ENCODE measurements at regions of chr17 and their contacts with region 1.

Region 1: DNA sequence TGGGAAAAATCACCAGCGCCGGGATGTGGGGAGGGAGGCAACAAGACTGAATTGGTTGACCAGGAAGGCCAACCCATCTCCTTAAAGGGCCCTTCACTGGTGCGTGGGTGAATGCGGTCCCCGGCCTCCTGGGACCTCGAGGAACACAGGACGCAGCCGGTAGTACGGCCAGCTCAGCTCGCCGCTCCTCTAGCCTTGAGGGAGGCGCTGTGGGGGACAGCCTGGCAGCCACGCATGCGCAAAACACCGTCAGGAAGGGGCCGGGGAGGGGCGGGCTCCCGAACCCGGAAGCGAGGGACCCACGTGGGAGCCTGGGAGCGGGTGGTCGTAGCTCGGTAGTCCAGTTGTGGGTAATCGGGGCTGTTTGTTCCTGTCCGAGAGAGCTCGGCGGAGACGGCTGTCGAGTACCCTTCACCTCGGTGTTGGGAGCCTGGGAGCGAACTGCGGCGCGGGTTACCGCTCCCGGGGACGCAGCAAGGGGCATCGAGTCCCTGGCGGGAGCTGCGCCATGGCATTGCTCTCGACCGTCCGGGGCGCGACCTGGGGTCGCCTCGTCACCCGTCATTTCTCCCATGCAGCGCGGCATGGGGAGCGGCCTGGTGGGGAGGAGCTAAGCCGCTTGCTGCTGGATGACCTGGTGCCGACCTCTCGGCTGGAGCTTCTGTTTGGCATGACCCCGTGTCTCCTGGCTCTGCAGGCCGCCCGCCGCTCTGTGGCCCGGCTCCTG is at the start of gene MRM1:
- DNase-seq: peak; percentile 93
- ATAC-seq: peak; percentile 88
- H3K4me3 ChIP-seq: peak within 1 kb of the TSS; percentile 55 to 100 (median 90)
- H3K4me3 Mint-ChIP-seq: peak within 1 kb of the TSS; percentile 92
- H3K27ac ChIP-seq: peak within 1 kb of the TSS; percentile 56 to 69
- H3K27ac Mint-ChIP-seq: peak within 1 kb of the TSS; percentile 93
- H3K4me1 ChIP-seq: peaks cover 11 to 25% of the 10 kb centered on the region in 2 donors
- H3K4me1 Mint-ChIP-seq: peaks cover 40% of the 10 kb centered on the region
- H3K27me3 ChIP-seq: no peaks in the 10 kb centered on the region
- H3K27me3 Mint-ChIP-seq: no peaks in the 10 kb centered on the region
- CTCF ChIP-seq: no peak
- total RNA-seq, gene MRM1: 13.5 and 14.4 TPM in 2 replicates

Region 2: DNA sequence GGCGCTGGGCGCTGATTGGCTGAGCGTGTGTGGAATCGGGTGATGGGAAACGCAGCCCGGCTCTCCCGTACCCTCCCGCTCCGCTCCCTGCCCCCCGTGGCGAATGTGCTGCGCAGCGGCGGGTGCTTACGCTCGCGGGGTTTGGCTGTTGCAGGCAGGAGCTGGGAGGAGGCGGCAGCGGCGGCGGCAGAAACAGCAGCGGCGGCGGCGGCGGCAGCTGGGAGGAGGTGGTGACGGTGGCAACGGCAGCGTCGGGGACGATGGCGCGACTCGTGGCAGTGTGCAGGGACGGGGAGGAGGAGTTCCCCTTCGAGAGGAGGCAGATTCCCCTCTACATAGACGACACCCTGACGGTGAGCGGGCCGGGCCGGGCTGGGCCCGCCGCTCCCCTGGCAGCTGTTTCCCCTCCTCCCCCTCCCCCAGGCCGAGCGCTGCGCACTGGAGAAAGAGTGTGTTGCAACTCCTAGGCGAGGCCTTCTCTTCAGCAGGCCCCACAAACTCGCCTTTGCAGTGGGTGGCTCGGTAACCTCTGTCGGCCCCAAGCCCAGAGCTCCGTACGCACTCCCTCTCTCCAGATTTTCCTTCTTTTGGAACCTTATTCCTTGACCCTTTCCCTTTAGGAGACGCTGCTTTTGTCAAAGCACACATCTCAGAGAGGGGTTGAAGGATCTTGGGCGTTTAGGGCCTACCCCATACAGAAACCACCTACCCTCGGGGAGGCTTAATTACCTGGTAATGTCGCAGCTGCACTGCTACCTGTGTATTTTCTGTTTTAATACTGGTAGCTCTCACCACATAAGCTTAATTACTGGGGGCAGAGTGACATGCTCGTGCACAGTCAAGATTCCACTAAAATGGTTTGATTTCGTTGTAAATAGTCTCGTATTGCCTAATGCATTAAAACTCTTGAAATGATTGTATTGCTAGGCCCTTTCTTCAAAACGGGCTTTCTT is 55.7 kb before region 1 on chr17:
- CTCF ChIA-PET with region 1: interaction called, 4 read pairs
- POLR2A ChIA-PET with region 1: interaction called, 10 read pairs
- intact Hi-C with region 1: loop called (anchors 1 kb)
- DNase-seq: peak; percentile 97
- ATAC-seq: peak; percentile 71
- H3K4me3 ChIP-seq: peak overlapping the region; percentile 74 to 94 (median 92)
- H3K4me3 Mint-ChIP-seq: peak overlapping the region; percentile 96
- H3K27ac ChIP-seq: peak overlapping the region; percentile 96 to 100
- H3K27ac Mint-ChIP-seq: peak overlapping the region; percentile 98
- H3K4me1 ChIP-seq: peaks cover 43 to 46% of the 10 kb centered on the region in 2 donors
- H3K4me1 Mint-ChIP-seq: peaks cover 48% of the 10 kb centered on the region
- H3K27me3 ChIP-seq: no peaks in the 10 kb centered on the region
- H3K27me3 Mint-ChIP-seq: no peaks in the 10 kb centered on the region
- CTCF ChIP-seq: no peak

Region 3: DNA sequence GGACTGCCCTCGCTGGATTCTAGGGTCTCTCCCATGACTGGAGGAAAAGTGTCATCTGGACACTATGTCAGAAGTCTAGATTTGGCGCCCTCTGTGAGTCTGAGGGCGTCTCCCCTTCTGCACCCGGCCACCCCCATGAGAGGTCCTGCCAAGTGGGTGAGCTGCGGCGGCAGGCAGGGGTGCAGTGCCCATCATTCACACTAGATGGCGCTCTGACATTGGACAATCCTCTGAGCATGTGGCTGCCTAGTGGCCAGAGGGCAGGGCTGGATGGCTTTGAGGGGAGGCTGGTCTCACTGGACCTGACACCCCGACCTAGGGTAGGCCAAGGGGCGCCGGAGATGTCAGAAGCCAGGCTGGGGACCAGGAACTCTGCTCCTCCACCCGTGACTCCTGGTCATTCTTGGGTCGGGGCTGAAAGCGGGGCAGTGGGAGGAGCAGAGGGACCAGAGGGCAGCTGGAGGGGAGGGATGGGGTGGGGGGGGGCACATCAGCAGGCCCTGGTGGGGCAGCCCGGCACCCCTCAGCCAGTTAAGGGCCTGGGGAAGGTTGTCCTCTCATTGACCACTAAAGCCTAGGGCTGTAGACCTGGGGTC is 27.9 kb after region 1 on chr17:
- CTCF ChIA-PET with region 1: interaction called, 32 read pairs
- POLR2A ChIA-PET with region 1: no interaction called
- intact Hi-C with region 1: no loop called
- DNase-seq: peak; percentile 80
- ATAC-seq: peak; percentile 93
- H3K4me3 ChIP-seq: no peak overlapping the region
- H3K4me3 Mint-ChIP-seq: no peak overlapping the region
- H3K27ac ChIP-seq: no peak overlapping the region
- H3K27ac Mint-ChIP-seq: no peak overlapping the region
- H3K4me1 ChIP-seq: no peaks in the 10 kb centered on the region
- H3K4me1 Mint-ChIP-seq: no peaks in the 10 kb centered on the region
- H3K27me3 ChIP-seq: peaks cover 0 to 5% (median 2%) of the 10 kb centered on the region in 4 experiments
- H3K27me3 Mint-ChIP-seq: peaks cover 15% of the 10 kb centered on the region
- CTCF ChIP-seq: peak; percentile 99

Region 4: DNA sequence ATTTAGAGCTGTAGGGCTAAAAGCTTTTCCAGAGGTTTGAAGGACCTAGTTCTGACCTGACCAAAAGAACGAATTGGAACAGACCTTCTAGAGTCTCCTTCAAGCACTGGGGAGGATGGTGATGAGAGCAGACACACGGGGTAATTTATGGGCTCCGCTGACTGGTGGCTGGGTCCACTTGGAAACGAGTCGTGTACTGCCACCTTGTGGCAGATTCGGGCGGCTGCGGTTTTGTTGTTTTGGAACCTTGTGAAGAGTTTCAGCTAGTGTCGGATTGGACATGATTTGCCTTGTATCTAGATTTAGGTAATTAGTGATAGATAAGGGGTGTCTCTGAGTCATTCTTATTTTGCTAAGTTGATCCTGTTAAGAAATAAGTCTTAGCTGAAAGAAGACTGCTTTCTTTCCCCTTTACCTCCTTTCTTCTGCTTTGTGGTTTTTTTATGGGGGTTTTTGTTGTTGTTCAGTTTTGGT is 446.2 kb after region 1 on chr17:
- CTCF ChIA-PET with region 1: interaction called, 66 read pairs
- POLR2A ChIA-PET with region 1: no interaction called
- intact Hi-C with region 1: loop called (anchors 1 kb)
- DNase-seq: peak; percentile 80
- ATAC-seq: peak; percentile 62
- H3K4me3 ChIP-seq: no peak overlapping the region
- H3K4me3 Mint-ChIP-seq: no peak overlapping the region
- H3K27ac ChIP-seq: no peak overlapping the region
- H3K27ac Mint-ChIP-seq: no peak overlapping the region
- H3K4me1 ChIP-seq: peaks cover 3 to 6% of the 10 kb centered on the region in 2 donors
- H3K4me1 Mint-ChIP-seq: peaks cover 14% of the 10 kb centered on the region
- H3K27me3 ChIP-seq: no peaks in the 10 kb centered on the region
- H3K27me3 Mint-ChIP-seq: no peaks in the 10 kb centered on the region
- CTCF ChIP-seq: peak; percentile 78

Region 5: DNA sequence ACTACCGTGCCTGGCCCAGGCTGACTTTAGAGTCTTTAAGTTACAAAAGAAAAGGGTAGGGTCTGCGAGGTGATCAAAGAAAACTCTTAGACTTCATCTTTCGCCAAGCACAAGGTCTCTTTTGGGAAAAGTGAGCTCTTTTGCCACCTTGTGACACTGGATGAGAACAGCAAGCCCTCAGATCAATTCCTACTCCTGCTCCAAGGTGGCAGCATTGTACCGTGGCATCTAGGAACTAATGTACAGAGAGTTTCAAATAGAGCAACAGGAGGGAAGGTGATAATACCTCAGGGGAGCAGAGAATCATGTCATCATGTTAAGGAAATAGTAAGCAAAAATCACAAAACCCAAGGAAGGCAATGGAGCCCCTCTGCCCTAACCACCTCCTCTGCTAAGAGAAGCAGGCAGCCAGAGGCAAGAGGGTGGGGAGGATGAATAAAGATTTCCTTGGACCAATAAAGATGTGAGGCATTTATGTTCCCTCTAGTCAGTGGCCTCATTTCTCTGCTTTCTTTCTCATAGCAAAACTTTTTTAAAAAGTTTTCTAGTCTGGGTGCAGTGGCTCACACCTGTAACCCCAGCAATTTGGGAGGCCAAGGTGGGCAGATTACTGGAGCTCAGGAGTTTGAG is 772.2 kb after region 1 on chr17:
- CTCF ChIA-PET with region 1: interaction called, 11 read pairs
- POLR2A ChIA-PET with region 1: interaction called, 3 read pairs
- intact Hi-C with region 1: no loop called
- DNase-seq: peak; percentile 73
- ATAC-seq: peak; percentile 85
- H3K4me3 ChIP-seq: no peak overlapping the region
- H3K4me3 Mint-ChIP-seq: no peak overlapping the region
- H3K27ac ChIP-seq: no peak overlapping the region
- H3K27ac Mint-ChIP-seq: no peak overlapping the region
- H3K4me1 ChIP-seq: no peaks in the 10 kb centered on the region
- H3K4me1 Mint-ChIP-seq: peaks cover 3% of the 10 kb centered on the region
- H3K27me3 ChIP-seq: no peaks in the 10 kb centered on the region
- H3K27me3 Mint-ChIP-seq: no peaks in the 10 kb centered on the region
- CTCF ChIP-seq: peak; percentile 83

Measured in B cell (primary cell).